Transverse colon (tissue), 4 donors: ENCODE measurements at regions of chr12 and their contacts with region 1.

Region 1: GRCh38 chr12:116818948-116819832 is 62.1 kb downstream of the HRK start:
- DNase-seq: peak; percentile 92
- H3K4me3 ChIP-seq: peak overlapping the region; percentile 51 to 84 (median 58)
- H3K27ac ChIP-seq: peak overlapping the region; percentile 90 to 94 (median 92)
- H3K4me1 ChIP-seq: peaks cover 0 to 16% (median 8%) of the 10 kb centered on the region in 4 donors
- H3K27me3 ChIP-seq: no peaks in the 10 kb centered on the region
- CTCF ChIP-seq: peak in 1 of 5 experiments; percentile 3
- EP300 ChIP-seq: no peak
- POLR2A ChIP-seq: peak; percentile 43

Region 2: DNA sequence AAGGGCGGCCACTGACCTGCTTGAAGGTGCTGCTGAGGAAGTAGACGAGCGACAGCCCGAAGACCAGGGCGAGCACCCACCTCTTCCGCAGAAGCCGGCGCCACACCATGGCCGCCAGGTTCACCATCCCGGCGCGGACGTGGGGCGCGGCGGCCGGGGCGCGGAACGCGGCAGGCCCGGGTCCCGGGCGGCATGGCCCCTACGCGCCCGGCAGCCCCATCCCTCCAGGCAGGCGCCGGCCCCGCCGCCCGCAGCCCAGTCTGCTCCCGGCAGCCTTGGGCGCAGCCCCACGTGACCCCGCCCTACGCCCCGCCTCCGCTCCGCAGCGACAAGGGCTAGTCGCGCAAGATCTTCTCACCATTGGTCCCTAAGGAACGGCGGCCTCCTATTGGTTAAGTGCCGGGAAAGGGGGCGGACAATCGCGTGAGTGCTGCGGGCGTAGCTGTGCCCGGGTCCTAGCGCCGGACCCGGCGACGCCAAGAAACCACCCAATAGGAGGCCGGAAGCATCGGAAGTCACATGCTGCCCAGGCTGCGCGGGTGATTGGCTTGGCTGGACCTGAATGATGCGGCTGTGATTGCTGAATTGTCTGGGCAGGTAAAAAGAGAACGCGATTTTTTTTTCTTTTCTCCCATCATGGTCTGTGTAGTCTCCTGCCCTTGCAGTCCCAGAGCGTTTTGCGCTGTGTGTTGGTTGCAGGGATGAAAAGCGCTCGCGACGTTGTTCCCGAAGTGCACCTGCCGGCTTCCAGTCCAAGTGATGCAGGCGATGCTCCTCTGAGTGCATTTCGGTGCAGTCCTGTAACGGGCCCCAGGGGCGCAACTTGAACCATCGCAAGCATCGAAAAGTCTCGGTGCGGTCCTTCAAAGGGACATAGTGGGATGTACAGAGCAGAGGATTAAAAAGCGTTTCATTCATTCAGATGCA is 81.2 kb before region 1 on chr12 and contains the starts of genes RNFT2 and SPRING1:
- in situ Hi-C with region 1: loop called in 1 of 4 experiments (anchors 10 kb)
- intact Hi-C with region 1: loop called (anchors 5 kb)
- DNase-seq: peak; percentile 99
- H3K4me3 ChIP-seq: peak within 1 kb of the TSS; percentile 83 to 100 (median 87)
- H3K27ac ChIP-seq: peak within 1 kb of the TSS; percentile 83 to 91 (median 86)
- H3K4me1 ChIP-seq: peaks cover 4 to 19% (median 14%) of the 10 kb centered on the region in 4 donors
- H3K27me3 ChIP-seq: no peaks in the 10 kb centered on the region
- CTCF ChIP-seq: peak in 1 of 5 experiments; percentile 5
- EP300 ChIP-seq: no peak
- POLR2A ChIP-seq: peak; percentile 58
- total RNA-seq, gene RNFT2: 0.20 to 1.1 (median 0.68) TPM in 3 of 4 donors, not detected in the other
- total RNA-seq, gene SPRING1: 22.3 to 40.3 (median 35.1) TPM

Region 3: DNA sequence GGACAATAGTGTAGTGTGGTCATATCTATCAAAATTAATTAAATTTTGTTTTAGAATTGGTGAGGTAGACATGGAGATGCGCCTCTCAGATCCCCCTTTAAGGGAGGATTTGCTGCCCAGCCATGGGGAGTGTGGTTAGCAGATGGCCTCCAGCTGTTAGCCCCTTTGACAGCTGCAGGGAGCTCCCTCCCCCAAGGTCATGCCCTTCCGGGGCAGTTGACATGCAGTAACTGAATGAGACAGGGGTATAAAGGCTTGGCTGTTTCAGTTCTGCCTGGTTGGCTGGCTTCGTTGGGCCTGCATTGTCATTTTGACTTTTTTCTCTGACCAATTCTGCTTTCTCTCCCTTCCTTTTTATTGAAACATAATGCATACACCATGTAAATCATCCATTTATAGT is 1870.6 kb after region 1 on chr12:
- in situ Hi-C with region 1: no loop called
- intact Hi-C with region 1: loop called (anchors 10 kb)
- DNase-seq: no peak
- H3K4me3 ChIP-seq: no peak overlapping the region
- H3K27ac ChIP-seq: no peak overlapping the region
- H3K4me1 ChIP-seq: peaks cover 0 to 11% (median 10%) of the 10 kb centered on the region in 4 donors
- H3K27me3 ChIP-seq: no peaks in the 10 kb centered on the region
- CTCF ChIP-seq: no peak
- EP300 ChIP-seq: no peak
- POLR2A ChIP-seq: no peak